ENCODE measurements at regions of chr10 and their contacts with region 1.

Region 1: DNA sequence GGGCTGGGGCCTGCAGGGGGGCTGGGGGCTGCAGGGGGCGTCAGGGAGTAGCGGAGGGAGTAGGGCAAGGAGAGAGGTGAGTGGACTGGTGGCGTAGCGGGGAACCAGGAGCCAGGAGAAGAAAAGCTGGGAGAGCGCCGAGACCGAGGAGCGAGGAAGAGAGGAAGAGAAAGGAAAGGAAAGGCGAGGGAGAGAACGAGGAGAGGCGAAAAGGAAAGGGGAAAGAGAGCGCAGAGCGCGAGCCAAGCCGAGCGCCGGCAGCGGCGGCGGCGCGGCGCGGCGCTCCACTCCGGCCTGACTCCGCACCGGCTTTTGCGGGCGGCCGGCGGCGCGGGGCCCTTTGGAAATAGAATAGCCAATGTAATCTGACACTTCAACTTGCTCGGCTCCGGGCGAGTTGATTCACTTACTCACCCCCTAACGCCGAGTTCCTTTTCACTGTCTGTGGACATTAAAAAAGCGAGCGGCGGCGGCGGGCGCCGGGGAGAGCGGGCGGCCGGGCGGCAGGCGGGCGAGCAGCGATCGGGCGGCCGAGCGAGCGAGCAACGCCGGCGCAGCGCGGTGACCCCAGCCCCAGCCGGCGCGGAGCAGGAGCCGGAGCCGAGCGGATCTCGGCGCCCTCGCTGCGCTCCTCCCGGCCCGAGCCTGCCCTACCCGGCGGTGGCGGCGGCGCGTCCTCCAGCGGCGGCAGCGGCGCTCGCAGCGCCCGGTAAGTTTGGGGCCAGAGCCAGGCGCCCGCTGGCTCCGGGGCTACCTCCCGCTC is at the start of gene ZMIZ1:
- DNase-seq: peak; percentile 87
- H3K4me3 ChIP-seq: peak within 1 kb of the TSS; percentile 58 to 81 (median 73)
- H3K27ac ChIP-seq: peak within 1 kb of the TSS; percentile 69
- H3K4me1 ChIP-seq: peaks cover 30% of the 10 kb centered on the region
- H3K27me3 ChIP-seq: no peaks in the 10 kb centered on the region
- CTCF ChIP-seq: peak in 1 of 2 donors; percentile 15
- POLR2A ChIP-seq: peak; percentile 81
- total RNA-seq, gene ZMIZ1: 46.7 and 49.6 TPM in 2 replicates

Region 2: DNA sequence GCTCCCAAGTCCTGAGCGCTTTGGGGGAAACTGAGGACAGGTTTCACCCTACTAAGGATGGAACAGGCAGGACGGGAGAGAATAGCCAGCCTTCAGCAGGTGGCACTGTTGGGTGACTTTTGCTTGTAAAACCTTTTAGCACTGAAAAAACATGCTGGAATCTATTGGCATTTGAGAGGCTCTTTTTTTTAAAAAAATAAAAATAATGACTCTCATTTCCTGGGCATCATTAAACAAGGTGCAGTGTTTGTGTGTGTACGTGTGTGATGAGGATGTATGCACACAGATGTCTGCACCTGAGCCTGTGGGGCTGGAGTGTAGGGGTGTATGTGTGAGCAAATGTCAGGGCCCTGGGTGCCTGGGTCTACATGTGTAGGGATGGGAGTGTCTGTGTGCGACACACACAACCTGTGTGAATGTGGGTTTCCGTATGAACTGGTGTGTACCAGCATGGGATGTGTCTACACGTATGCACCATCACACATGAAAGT is 857.1 kb before region 1 on chr10:
- CTCF ChIA-PET with region 1: interaction called, 3 read pairs
- POLR2A ChIA-PET with region 1: no interaction called
- dilution Hi-C with region 1: no loop called
- intact Hi-C with region 1: loop called (anchors 5 kb)
- DNase-seq: peak; percentile 55
- H3K4me3 ChIP-seq: no peak overlapping the region
- H3K27ac ChIP-seq: no peak overlapping the region
- H3K4me1 ChIP-seq: no peaks in the 10 kb centered on the region
- H3K27me3 ChIP-seq: peaks cover 4 to 5% of the 10 kb centered on the region in 2 experiments
- CTCF ChIP-seq: peak; percentile 49 to 65
- POLR2A ChIP-seq: no peak

Region 3: GRCh38 chr10:78335691-78336401 is 732.9 kb before region 1 on chr10:
- CTCF ChIA-PET with region 1: interaction called, 3 read pairs
- POLR2A ChIA-PET with region 1: no interaction called
- dilution Hi-C with region 1: no loop called
- intact Hi-C with region 1: loop called (anchors 1 kb)
- DNase-seq: peak; percentile 87
- H3K4me3 ChIP-seq: no peak overlapping the region
- H3K27ac ChIP-seq: peak overlapping the region; percentile 73
- H3K4me1 ChIP-seq: peaks cover 20% of the 10 kb centered on the region
- H3K27me3 ChIP-seq: no peaks in the 10 kb centered on the region
- CTCF ChIP-seq: no peak
- POLR2A ChIP-seq: peak; percentile 71

Region 4: DNA sequence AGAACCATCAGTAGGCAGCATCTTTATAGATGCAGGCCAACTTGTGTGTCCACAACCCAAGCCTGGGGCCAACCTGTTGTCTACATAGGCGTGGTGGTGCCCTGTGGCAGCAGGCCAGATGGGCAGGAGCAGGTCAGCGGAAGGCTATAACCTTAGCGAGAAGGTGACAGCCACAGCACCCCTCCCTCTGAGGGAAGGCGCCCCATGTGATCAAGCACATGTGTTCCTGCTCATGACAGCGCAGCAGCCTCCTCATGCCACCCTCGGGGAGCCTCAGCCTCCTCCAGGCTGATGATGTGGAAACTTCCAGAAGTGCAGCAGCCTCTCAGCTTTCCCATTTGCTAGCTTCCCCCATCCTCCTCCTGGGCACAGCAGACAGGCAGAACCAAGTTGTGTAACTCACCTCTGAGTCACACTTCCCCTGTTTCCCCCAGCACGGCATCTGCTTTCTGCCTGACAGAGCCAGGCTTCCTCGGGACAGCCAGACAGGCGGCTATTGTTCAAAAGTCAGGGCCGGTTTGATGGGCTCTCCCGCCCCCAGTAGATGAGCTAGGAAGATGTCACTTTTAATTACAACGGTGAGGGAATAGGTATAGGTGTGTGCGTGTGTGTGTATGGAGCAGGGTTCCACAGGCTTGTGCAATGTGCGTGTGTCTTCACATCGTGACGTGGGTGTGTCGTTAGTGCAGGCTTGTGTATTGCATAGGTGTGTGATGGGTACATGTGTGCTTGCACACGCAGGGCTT is 312.0 kb before region 1 on chr10:
- CTCF ChIA-PET with region 1: no interaction called
- POLR2A ChIA-PET with region 1: no interaction called
- dilution Hi-C with region 1: no loop called
- intact Hi-C with region 1: loop called (anchors 5 kb)
- DNase-seq: peak; percentile 95
- H3K4me3 ChIP-seq: no peak overlapping the region
- H3K27ac ChIP-seq: peak overlapping the region; percentile 54
- H3K4me1 ChIP-seq: peaks cover 34% of the 10 kb centered on the region
- H3K27me3 ChIP-seq: peaks cover 0 to 6% of the 10 kb centered on the region in 2 experiments
- CTCF ChIP-seq: no peak
- POLR2A ChIP-seq: no peak

Region 5: DNA sequence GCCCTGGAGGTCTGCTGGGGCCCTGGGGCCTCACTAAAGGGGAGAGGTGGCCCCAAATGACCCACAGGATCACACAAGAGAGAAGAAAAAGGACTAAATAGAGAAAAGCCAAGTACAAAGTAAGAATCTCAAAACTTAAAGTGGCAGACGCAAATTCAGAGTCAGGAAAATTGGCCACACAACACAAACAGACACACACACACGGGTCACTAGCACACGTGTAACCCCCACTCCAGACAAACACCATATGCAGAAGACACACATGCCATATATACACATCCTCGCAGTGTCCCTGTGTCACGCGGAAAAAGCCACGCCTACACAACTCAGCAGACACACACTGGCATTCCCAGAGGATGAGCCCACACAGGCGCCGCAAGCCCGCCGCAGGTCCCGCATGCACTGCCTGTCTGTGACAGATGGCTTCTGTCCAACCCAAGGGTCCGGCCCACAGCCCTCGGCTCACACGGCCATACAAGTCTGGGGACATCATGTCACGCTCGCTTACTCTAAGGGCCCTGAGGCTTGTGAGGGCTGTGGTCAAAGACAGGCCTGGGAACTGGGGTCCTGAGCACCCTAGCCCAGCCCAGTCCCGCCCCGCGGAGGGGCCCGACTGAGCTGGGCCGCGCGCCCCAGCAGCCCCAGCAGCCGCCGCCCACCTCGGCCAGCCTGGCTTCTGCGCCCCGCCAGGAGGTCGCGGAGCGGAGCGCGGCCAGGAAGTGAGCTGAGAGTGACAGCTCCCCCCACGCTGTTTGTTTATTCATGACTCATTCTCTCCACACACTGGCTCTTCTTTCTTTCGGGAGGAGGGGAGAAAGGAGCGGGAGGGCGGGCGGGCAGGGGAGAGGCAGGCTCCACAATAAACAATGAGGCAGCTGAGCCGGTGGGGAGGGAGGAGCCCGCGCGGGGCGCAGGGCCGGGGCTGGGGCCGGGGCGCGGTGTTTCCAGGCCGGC is 95.5 kb before region 1 on chr10:
- CTCF ChIA-PET with region 1: interaction called, 10 read pairs
- POLR2A ChIA-PET with region 1: interaction called, 3 read pairs
- dilution Hi-C with region 1: no loop called
- intact Hi-C with region 1: loop called (anchors 1 kb)
- DNase-seq: peak; percentile 91
- H3K4me3 ChIP-seq: peak overlapping the region in 2 of 3 experiments; percentile 11 to 15
- H3K27ac ChIP-seq: peak overlapping the region; percentile 98
- H3K4me1 ChIP-seq: peaks cover 32% of the 10 kb centered on the region
- H3K27me3 ChIP-seq: no peaks in the 10 kb centered on the region
- CTCF ChIP-seq: no peak
- POLR2A ChIP-seq: peak; percentile 55

Region 6: DNA sequence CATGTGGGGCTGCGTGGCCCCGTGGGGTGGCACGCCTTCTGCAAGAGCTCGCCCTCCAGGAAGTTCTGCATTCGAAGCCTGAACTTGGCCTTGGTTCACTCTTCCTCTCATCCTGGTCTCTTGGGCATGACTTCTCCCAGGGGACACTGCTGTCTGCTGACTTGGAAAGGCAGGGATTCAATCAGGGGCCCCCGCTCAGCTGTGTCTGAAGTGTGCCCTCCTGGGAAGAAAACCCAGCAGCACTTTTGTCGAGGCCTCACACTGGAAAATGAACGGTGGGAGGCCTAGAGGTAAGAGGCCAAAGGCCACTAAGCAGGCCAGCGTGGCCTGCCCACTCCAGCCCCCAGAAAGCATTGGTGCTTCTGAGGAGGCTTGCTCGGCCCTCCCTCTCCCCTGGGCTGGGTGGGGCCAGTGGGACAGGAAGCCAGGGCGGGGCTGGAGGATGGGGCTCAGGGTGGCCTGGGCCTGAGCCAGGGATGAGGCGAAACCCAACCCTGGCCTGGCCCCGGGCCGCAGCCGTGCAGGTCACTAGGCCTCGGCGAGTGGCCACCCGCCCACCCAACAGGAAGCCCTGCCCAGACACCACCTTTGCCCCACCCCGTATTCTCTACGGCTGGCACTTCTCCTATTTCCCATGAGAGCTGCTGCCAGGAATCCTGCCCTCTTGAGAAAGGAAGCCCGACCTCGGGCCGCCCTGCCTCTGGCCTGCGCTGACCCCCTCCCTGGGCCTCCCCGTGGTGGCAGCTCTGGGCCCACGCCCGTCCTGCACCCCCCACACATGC is 81.1 kb after region 1 on chr10:
- CTCF ChIA-PET with region 1: interaction called, 3 read pairs
- POLR2A ChIA-PET with region 1: no interaction called
- dilution Hi-C with region 1: no loop called
- intact Hi-C with region 1: loop called (anchors 2 kb)
- DNase-seq: no peak
- H3K4me3 ChIP-seq: no peak overlapping the region
- H3K27ac ChIP-seq: peak overlapping the region; percentile 88
- H3K4me1 ChIP-seq: peaks cover 84% of the 10 kb centered on the region
- H3K27me3 ChIP-seq: no peaks in the 10 kb centered on the region
- CTCF ChIP-seq: no peak
- POLR2A ChIP-seq: peak; percentile 43